Activated T-helper 2 cell treated with anti-CD3 and anti-CD28 coated beads, Interferon-gamma antibody, Interleukin-2, Interleukin-4, amounts not matched to agents 10 μg/mL and 5 μg/mL and 100 μg/mL, durations not matched to agents 14 hours and 24 hours and 36 hours (primary cell): ENCODE measurements at regions of chr6 and their contacts with region 1.

Region 1: GRCh38 chr6:14210663-14211561 is 93.3 kb downstream of the CD83 start:
- DNase-seq: peak; percentile 92
- H3K4me3 Mint-ChIP-seq: peak overlapping the region; percentile 78
- H3K27ac Mint-ChIP-seq: peak overlapping the region; percentile 83
- H3K4me1 Mint-ChIP-seq: peaks cover 40% of the 10 kb centered on the region
- H3K27me3 Mint-ChIP-seq: no peaks in the 10 kb centered on the region

Region 2: DNA sequence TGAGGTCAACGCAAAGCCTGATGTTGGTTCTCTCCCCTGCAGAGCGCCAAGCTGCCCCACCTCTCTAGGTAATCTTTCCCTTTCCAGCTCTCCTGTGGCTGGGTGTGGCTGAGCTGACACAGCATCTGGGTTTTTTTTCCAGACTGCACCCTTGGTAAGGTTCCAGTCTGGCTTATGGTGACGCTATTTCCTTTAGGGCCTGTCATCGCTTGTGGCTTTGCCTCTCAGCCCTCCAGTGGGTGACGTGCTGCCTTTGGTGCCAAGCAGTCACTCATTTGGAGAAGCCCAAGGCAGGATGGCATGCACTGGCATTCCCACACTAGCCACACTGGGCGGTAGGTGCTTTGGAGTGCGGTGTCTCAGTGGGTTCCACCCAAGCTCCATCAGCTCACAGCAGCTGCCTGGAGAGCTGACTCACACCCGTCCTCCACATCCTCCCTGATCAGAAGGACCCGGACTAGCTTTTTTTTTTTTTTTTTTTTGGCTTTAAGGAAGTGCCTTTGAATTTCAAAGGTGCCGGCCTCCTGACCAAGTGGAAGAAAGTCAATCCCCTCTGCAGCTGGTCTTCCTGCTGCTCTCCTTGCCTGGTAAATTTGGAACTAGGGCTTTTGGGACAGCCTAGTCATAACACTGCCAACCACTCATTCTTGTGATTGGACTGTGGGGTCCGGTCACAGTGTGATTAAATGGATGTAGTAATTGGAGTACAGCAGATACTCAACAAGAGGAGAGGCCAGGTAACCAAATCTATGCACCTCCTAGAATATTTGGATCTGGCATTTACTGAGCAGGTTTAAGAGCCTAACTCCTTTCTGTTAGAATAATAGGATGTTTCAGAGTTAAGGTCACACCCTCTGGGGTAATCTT is 60.2 kb after region 1 on chr6:
- intact Hi-C with region 1: loop called (anchors 5 kb)
- DNase-seq: peak; percentile 69
- H3K4me3 Mint-ChIP-seq: no peak overlapping the region
- H3K27ac Mint-ChIP-seq: peak overlapping the region; percentile 82
- H3K4me1 Mint-ChIP-seq: peaks cover 58% of the 10 kb centered on the region
- H3K27me3 Mint-ChIP-seq: no peaks in the 10 kb centered on the region

Region 3: DNA sequence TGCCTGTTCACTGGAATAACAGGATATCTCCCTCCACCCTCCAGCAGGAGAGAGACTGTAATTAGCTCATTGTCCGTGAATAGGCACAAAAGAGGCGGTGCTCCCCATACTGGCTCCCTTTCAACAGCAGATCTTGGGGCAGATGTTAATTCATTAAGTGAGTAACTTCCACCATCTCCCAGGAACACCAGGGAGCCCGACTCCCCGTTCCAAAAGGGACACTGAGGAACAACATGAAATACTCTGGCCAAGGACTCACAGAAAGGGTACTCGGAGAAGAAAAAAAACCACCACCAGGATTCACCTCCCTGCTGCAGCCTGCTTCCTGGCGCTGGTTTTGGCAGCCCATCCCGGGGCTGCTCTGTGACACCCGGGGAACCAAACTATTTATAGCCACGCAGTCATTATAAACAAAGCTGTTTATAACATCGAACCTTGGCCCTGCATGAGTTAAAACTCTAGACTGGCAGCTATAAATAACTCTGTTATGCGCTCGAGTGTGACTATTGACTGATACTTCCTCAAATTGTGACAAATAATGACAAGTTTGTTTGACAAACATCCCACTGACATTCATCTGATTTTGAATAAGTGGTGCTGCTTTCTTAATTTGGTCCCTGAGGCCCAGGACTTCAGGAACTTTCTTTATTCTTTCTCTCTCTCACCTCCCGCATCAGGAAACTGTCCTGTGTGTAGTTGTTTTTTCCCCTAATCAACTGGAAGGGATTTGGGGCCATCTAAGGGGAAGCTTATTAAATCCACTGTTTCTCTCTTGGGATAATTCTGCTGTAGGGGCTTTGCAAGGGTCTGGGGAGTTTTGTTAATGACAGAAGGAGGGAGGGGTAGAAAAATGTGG is 428.2 kb after region 1 on chr6:
- intact Hi-C with region 1: loop called (anchors 1 kb)
- DNase-seq: no peak
- H3K4me3 Mint-ChIP-seq: no peak overlapping the region
- H3K27ac Mint-ChIP-seq: no peak overlapping the region
- H3K4me1 Mint-ChIP-seq: peaks cover 74% of the 10 kb centered on the region
- H3K27me3 Mint-ChIP-seq: peaks cover 3% of the 10 kb centered on the region

Region 4: GRCh38 chr6:14711056-14711703 is 500.3 kb after region 1 on chr6:
- intact Hi-C with region 1: loop called (anchors 2 kb)
- DNase-seq: peak; percentile 63
- H3K4me3 Mint-ChIP-seq: peak overlapping the region; percentile 75
- H3K27ac Mint-ChIP-seq: peak overlapping the region; percentile 99
- H3K4me1 Mint-ChIP-seq: peaks cover 60% of the 10 kb centered on the region
- H3K27me3 Mint-ChIP-seq: no peaks in the 10 kb centered on the region

Region 5: DNA sequence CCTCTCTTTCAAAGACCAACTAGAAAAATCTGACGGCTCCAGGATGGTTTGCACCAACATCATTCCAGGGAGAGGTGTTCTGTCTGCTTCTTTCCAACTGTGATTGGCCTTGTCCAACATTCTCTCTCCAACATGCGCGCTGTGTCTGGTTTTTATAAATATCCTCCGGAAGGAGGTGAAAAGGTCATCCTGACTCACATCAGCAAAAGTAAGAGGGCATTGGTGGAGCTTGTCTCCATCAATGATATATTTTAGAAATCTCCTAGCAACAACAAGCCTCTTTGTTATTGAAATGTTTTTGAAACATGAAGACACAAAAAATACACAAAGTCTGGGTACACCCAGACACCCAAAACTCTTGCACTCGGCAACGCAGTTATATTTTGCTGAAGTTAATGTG is 559.7 kb after region 1 on chr6:
- intact Hi-C with region 1: no loop called
- DNase-seq: no peak
- H3K4me3 Mint-ChIP-seq: no peak overlapping the region
- H3K27ac Mint-ChIP-seq: no peak overlapping the region
- H3K4me1 Mint-ChIP-seq: peaks cover 7% of the 10 kb centered on the region
- H3K27me3 Mint-ChIP-seq: no peaks in the 10 kb centered on the region